Kidney (tissue), 22 donors: ENCODE measurements at regions of chr3 and their contacts with region 1.

Region 1: DNA sequence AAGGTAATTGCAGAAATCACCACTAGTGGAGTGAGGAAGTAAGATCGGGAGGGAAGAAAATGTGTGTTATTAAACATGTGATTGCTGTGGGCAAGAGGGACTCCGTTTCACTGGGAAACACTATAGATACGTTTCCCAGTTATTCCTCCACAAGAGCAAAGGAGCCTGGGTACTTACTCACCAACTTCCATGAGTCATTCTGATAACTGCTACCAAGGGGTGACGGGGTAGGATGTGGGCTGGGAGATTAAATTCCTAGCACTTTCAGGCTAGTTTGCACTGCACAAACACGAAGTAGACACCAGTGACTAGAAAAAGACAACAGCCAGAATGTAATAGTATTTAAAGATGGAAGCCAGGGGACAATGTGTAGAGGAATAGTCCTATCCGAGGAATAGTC is 812.9 kb upstream of the CFAP20DC start:
- DNase-seq: no peak
- H3K4me3 ChIP-seq: no peak overlapping the region
- H3K27ac ChIP-seq: no peak overlapping the region
- H3K4me1 ChIP-seq: no peaks in the 10 kb centered on the region
- H3K27me3 ChIP-seq: no peaks in the 10 kb centered on the region
- CTCF ChIP-seq: no peak

Region 2: GRCh38 chr3:59573911-59574310 is 288.8 kb before region 1 on chr3:
- intact Hi-C with region 1: loop called (anchors 5 kb)
- DNase-seq: no peak
- H3K4me3 ChIP-seq: no peak overlapping the region
- H3K27ac ChIP-seq: no peak overlapping the region
- H3K4me1 ChIP-seq: peaks cover 0 to 4% (median 3%) of the 10 kb centered on the region in 3 donors
- H3K27me3 ChIP-seq: no peaks in the 10 kb centered on the region
- CTCF ChIP-seq: no peak